Vagina (tissue), 2 donors: ENCODE measurements at regions of chr7 and their contacts with region 1.

Region 1: DNA sequence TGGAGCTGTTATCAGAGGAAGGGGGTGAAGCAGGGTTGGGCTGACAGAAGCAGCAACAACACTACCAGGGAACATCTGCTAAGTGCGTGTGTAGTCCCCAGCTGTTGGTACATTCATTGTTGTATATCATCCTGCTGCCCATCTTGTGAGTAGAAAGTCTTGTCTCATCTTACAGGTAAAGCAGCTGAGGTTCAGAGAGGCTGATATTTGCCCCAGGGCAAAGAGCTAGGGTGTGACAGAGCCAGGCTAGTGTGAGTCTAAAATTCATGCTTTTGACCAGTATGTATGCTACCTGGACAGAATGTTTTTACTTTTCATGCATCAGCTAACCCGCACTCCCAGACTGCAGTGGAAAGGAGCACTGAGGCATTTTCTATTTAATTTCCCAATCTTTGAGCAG is 221.6 kb downstream of the STK31 start:
- DNase-seq: no peak
- H3K4me3 ChIP-seq: no peak overlapping the region
- H3K27ac ChIP-seq: no peak overlapping the region
- H3K4me1 ChIP-seq: no peaks in the 10 kb centered on the region
- H3K27me3 ChIP-seq: no peaks in the 10 kb centered on the region
- CTCF ChIP-seq: no peak
- POLR2A ChIP-seq: no peak

Region 2: GRCh38 chr7:22127835-22128527 is 1803.7 kb before region 1 on chr7:
- intact Hi-C with region 1: loop called (anchors 5 kb)
- DNase-seq: no peak
- H3K4me3 ChIP-seq: no peak overlapping the region
- H3K27ac ChIP-seq: no peak overlapping the region
- H3K4me1 ChIP-seq: no peaks in the 10 kb centered on the region
- H3K27me3 ChIP-seq: no peaks in the 10 kb centered on the region
- CTCF ChIP-seq: no peak
- POLR2A ChIP-seq: no peak

Region 3: GRCh38 chr7:22675917-22676343 is 1255.7 kb before region 1 on chr7:
- intact Hi-C with region 1: loop called (anchors 5 kb)
- DNase-seq: no peak
- H3K4me3 ChIP-seq: no peak overlapping the region
- H3K27ac ChIP-seq: no peak overlapping the region
- H3K4me1 ChIP-seq: no peaks in the 10 kb centered on the region
- H3K27me3 ChIP-seq: no peaks in the 10 kb centered on the region
- CTCF ChIP-seq: no peak
- POLR2A ChIP-seq: no peak